K562 (cell line): ENCODE measurements at regions of chr1 and their contacts with region 1.

Region 1: DNA sequence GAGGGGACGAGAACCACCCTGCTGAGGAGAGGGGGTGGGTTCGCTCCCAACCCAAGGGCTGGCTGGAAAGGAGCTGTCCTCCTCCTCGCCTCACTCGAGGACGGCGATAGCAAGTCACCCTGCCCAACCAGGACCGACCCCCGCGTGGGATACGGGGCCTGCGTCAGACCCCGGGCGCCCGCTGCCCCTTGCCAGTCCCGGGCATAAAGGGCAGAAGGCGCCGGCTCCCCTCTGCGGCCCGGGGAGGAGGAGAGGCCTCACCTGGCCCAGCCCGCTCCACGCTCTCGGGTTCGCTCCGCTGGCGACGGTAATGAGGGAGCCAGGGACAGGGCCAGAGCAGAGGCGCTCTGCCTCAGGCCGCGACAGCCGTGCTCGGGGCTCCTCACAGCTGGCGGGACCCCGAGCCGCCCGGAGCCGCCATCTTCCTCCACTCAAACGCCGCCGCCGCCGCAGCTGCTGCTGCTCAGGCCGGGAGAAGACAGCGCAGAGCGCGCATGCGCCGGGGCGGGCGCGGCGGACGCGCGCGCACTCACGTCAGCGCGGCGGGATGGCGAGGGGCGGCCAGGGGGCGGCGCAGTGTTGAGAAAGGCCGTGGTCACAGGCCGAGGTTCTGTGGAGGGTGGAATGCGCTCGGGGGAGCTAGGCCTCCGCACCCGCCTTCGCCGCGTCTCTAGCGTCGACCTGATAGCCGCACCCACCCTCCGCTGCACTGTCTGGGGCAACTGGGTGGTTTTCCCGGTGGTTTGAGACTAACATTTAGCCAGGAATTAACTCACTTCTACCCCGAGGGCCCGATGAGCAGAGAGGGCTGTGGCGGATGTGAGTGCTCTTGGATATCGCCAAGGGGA is at the start of gene FBXO42:
- DNase-seq: peak; percentile 96 to 98 (median 96)
- ATAC-seq: peak; percentile 92
- H3K4me3 ChIP-seq: peak within 1 kb of the TSS; percentile 96
- H3K27ac ChIP-seq: peak within 1 kb of the TSS; percentile 88
- H3K4me1 ChIP-seq: peaks cover 19 to 25% of the 10 kb centered on the region in 2 experiments
- H3K27me3 ChIP-seq: no peaks in the 10 kb centered on the region
- CTCF ChIP-seq: peak; percentile 56 to 78 (median 73)
- EP300 ChIP-seq: no peak; the same call in none of the 2 replicates
- POLR2A ChIP-seq: peak; percentile 91
- RAD21 ChIP-seq: peak; percentile 34 to 46
- polyA plus RNA-seq, gene FBXO42: 7.2 to 8.0 TPM

Region 2: GRCh38 chr1:15885701-15886610 is 466.3 kb before region 1 on chr1:
- CTCF ChIA-PET with region 1: no interaction called
- POLR2A ChIA-PET with region 1: no interaction called
- in situ Hi-C with region 1: no loop called
- intact Hi-C with region 1: no loop called
- DNase-seq: peak; percentile 85 to 97 (median 91)
- ATAC-seq: peak; percentile 97
- H3K4me3 ChIP-seq: peak overlapping the region; percentile 24
- H3K27ac ChIP-seq: peak overlapping the region; percentile 85
- H3K4me1 ChIP-seq: peaks cover 14 to 23% of the 10 kb centered on the region in 2 experiments; a peak in 4 of 5 replicates
- H3K27me3 ChIP-seq: no peaks in the 10 kb centered on the region
- CTCF ChIP-seq: peak in 2 of 3 experiments; percentile 4 to 36; a peak in 3 of 6 replicates
- EP300 ChIP-seq: peak; percentile 84
- POLR2A ChIP-seq: peak; percentile 70
- RAD21 ChIP-seq: 0 out of 4 replicates have a peak, but pooled peaks of 1 of the 2 experiments have one; percentile 6

Region 3: DNA sequence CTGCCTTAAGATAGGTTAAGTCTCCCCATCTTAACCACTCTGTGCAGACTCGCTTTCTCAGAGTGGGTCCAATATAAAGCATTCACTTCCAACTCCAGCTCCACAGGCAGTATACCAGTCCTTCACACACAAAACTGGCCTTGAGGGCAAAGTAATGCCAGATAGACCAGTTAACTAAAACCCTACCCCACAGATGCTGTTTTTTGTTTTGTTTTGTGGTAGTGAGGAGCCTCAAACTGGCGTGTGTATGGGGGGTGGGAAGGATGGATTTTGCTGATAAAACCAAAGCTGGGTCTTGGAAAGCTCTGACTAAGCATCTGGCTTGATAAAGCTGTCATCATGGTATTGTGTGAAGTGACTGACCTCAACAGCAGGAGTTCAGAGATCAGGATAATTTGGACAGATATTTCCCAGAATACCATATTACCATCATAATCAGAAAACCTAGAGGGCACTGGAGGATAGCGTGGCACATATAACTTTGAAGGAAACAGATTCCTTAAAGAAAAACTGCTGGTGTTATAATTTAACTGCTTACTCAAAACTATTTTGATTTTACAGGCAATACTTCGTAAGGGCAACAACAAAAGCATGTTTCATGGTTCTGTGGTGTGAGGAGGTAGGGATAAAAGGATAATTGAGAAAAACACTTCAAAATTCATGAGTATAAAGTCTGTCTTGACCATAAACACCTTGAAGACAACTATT is 85.7 kb before region 1 on chr1:
- CTCF ChIA-PET with region 1: no interaction called
- POLR2A ChIA-PET with region 1: no interaction called
- in situ Hi-C with region 1: no loop called
- intact Hi-C with region 1: loop called (anchors 5 kb)
- DNase-seq: peak; percentile 66 to 86 (median 80)
- ATAC-seq: peak; percentile 91
- H3K4me3 ChIP-seq: no peak overlapping the region
- H3K27ac ChIP-seq: no peak overlapping the region
- H3K4me1 ChIP-seq: peaks cover 0 to 18% of the 10 kb centered on the region in 2 experiments; a peak in 4 of 5 replicates
- H3K27me3 ChIP-seq: no peaks in the 10 kb centered on the region
- CTCF ChIP-seq: no peak
- EP300 ChIP-seq: peak; percentile 93
- POLR2A ChIP-seq: no peak
- RAD21 ChIP-seq: peak in 1 of 2 experiments; percentile 9; a peak in 2 of 4 replicates

Region 4: DNA sequence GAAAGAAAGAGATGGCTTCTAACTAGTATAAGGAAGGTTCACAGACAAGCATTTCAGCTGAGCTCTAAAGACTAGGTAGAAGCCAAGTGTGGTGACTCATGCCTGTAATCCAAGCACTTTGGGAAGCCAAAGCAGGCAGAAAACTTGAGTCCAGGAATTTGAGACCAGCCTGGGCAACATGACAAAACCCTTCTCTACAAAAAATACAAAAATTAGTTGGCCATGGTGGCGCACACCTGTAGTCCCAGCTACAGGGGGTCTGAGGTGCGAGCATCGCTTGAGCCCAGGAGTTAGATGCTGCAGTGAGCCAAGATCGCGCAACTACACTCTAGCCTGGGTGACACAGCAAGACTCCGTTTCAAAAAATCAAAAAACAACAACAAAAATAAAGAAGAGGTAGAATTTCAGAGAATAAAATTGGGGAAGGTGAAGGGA is 27.7 kb before region 1 on chr1:
- CTCF ChIA-PET with region 1: no interaction called
- POLR2A ChIA-PET with region 1: no interaction called
- in situ Hi-C with region 1: no loop called
- intact Hi-C with region 1: no loop called
- DNase-seq: peak in 1 of 4 experiments; percentile 23
- ATAC-seq: peak; percentile 62; the same call in 2 of the 3 replicates
- H3K4me3 ChIP-seq: no peak overlapping the region
- H3K27ac ChIP-seq: no peak overlapping the region
- H3K4me1 ChIP-seq: no peaks in the 10 kb centered on the region
- H3K27me3 ChIP-seq: no peaks in the 10 kb centered on the region
- CTCF ChIP-seq: no peak
- EP300 ChIP-seq: no peak
- POLR2A ChIP-seq: no peak
- RAD21 ChIP-seq: no peak

Region 5: DNA sequence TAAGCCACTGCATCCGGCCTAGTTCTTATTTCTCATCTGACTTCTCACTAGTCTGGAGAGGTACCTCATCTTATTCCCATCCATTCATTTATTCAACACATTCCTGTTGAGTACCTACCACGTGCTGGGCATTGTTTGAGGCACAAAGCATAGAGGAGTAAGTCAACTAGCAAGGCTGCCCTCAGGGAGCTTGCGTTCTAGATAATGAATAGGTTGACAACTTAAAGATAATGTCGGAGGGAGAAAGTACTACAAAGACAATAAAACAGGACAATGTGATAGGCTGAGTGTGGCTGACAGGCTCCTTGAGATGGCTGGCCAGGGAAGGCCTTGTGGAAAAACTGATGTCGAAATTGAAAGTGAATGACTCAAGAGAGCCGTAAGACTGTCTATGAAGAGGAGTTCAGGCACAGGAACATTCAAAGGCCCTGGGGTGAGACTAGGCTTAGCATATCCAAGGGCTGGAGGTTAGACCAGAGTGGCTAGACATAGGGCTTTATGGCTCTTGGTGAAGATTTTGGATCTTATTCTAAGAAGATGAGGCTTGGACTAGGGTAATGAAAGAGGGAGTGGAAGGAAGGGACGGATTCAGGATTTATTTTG is 66.7 kb after region 1 on chr1:
- CTCF ChIA-PET with region 1: no interaction called
- POLR2A ChIA-PET with region 1: no interaction called
- in situ Hi-C with region 1: no loop called
- intact Hi-C with region 1: no loop called
- DNase-seq: no peak
- ATAC-seq: no peak
- H3K4me3 ChIP-seq: no peak overlapping the region
- H3K27ac ChIP-seq: no peak overlapping the region
- H3K4me1 ChIP-seq: peaks cover 0 to 16% of the 10 kb centered on the region in 2 experiments; a peak in 3 of 5 replicates
- H3K27me3 ChIP-seq: peaks cover 8 to 22% of the 10 kb centered on the region in 2 experiments; a peak in 4 of 5 replicates
- CTCF ChIP-seq: no peak
- EP300 ChIP-seq: no peak
- POLR2A ChIP-seq: no peak
- RAD21 ChIP-seq: no peak